Aorta (tissue), 5 donors: ENCODE measurements at regions of chr1 and their contacts with region 1.

Region 1: DNA sequence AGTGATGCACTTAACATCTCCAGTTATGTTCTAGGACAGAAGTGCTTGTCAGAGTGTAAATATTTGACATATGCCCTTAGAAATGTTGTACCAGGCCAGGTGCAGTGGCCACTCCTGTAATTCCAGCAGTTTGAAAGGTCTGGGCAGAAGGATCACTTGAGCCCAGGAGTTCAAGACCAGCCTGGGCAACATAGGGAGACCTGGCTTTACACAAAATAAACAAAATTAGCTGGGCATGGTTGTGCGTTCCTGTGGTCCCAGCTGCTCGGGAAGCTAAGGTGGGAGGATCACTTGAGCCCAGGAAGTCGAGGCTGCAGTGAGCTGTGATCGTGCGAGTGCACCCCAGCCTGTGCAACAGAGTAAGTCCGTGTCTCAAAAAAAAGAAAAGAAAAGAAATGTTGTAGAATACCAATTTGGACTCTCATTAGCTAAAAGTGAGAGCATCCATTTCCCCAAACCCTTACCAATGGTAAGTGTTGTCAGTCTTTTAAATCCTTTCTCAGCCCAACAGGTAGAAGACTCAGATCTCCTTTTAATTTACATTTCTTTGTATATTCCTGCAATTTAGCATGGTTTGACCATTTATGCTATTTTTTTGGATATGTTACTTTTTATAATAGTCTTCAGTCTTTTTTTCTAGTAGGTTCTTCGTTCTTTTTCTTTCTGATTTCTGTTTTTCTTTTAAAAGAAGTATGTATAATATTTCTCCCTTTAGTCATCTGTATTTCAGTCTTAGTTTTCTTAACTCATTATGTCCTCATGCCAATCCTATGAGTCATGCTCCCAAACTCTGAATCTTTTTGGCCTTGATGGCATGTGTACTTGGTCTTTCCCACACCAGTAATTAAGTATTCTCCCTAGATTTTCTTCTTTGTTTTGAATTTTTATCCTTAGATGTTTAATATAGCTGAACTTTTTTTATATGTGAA is 74.4 kb downstream of the CAMTA1 start:
- DNase-seq: no peak
- ATAC-seq: no peak
- H3K4me3 ChIP-seq: no peak overlapping the region
- H3K27ac ChIP-seq: peak overlapping the region; percentile 69 to 97
- H3K4me1 ChIP-seq: peaks cover 0 to 9% of the 10 kb centered on the region in 2 donors
- H3K27me3 ChIP-seq: no peaks in the 10 kb centered on the region

Region 2: DNA sequence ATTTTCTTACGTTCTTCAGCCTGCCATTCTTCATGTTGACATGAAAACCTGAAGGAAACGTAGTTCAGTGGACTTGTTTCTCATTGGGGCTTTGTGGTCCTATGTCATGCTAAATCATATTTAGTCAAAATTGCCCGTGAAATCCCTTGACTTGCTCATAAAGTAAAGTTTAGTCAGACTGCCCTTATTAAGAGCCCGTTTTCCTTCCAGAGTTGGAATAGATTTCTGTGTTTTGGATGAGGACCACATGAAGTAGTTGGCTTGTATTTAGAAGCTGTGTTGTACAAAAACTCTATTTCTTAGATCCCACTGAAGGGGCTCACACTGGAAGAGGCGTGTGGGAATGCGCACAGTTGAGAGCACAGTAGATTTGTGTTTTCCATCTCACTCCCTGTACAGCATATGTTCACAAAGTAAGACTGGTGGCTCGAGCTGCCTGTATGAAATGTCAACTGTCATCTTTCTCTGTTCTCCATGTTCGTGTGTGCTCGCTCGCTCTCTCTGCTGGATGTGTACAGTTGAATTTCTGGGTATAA is 32.0 kb before region 1 on chr1:
- intact Hi-C with region 1: loop called in 1 of 2 experiments (anchors 5 kb)
- DNase-seq: no peak
- ATAC-seq: peak; percentile 50
- H3K4me3 ChIP-seq: peak overlapping the region in 1 of 2 donors; percentile 24
- H3K27ac ChIP-seq: peak overlapping the region in 1 of 2 donors; percentile 85
- H3K4me1 ChIP-seq: peaks cover 2 to 12% of the 10 kb centered on the region in 2 donors
- H3K27me3 ChIP-seq: no peaks in the 10 kb centered on the region

Region 3: GRCh38 chr1:6898974-6899539 is 39.4 kb after region 1 on chr1:
- intact Hi-C with region 1: no loop called
- DNase-seq: no peak
- ATAC-seq: no peak
- H3K4me3 ChIP-seq: no peak overlapping the region
- H3K27ac ChIP-seq: no peak overlapping the region
- H3K4me1 ChIP-seq: no peaks in the 10 kb centered on the region
- H3K27me3 ChIP-seq: no peaks in the 10 kb centered on the region

Region 4: DNA sequence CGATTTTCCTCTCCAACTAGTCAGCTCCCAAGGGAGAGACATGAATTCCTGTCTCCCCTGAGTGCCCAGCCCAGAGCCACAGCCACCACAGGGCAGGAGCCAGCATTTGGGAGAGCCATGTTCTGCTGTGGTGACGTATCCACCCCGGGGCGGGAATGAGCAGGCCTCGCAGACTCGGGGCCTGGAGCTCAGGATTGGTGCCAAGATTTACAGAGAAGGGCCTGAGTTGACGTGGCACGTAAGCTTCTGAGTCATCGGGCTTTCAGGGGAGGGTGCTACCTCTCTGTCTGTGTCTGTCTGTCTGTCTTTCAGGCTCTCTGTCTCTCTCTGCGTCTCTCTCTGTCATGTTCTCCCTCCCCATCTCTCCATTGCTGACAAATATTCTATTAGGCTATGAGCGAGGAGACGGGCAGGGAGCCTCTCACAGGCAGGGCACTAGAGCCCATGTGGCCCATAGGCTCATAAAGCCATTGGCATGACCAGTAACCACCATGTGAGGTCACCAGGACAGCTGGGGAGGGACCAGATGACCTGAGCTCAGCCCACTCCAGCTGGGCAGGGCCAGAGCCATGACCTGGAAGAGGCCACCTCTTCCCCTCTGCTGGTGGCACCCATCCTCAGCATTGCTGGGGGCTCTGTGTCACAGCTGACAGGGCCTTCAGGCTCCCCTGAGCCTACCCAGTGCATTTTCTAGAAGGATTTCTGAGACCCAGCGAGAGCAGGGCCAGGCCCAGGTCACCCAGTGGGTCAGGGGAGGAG is 611.4 kb after region 1 on chr1:
- intact Hi-C with region 1: no loop called
- DNase-seq: peak; percentile 92 to 94
- ATAC-seq: peak; percentile 73
- H3K4me3 ChIP-seq: no peak overlapping the region
- H3K27ac ChIP-seq: peak overlapping the region in 1 of 2 donors; percentile 67
- H3K4me1 ChIP-seq: peaks cover 0 to 1% of the 10 kb centered on the region in 2 donors
- H3K27me3 ChIP-seq: no peaks in the 10 kb centered on the region